Heart left ventricle (tissue), 16 donors: ENCODE measurements at regions of chr3 and their contacts with region 1.

Region 1: GRCh38 chr3:42961633-42962032 is 17.5 kb upstream of the GASK1A start:
- DNase-seq: peak in 2 of 5 donors; percentile 16 to 29
- ATAC-seq: peak in 3 of 4 donors; percentile 49 to 68 (median 59)
- H3K4me3 ChIP-seq: no peak overlapping the region
- H3K27ac ChIP-seq: no peak overlapping the region
- H3K4me1 ChIP-seq: peaks cover 0 to 6% (median 0%) of the 10 kb centered on the region in 12 donors
- H3K27me3 ChIP-seq: no peaks in the 10 kb centered on the region
- CTCF ChIP-seq: peak; percentile 50 to 79 (median 65)
- POLR2A ChIP-seq: no peak

Region 2: GRCh38 chr3:43013743-43014155 is 52.1 kb after region 1 on chr3:
- intact Hi-C with region 1: no loop called
- DNase-seq: no peak
- ATAC-seq: no peak
- H3K4me3 ChIP-seq: no peak overlapping the region
- H3K27ac ChIP-seq: peak overlapping the region in 1 of 12 donors; percentile 46
- H3K4me1 ChIP-seq: no peaks in the 10 kb centered on the region
- H3K27me3 ChIP-seq: no peaks in the 10 kb centered on the region
- CTCF ChIP-seq: no peak
- POLR2A ChIP-seq: no peak

Region 3: GRCh38 chr3:43087249-43087776 is 125.7 kb after region 1 on chr3:
- intact Hi-C with region 1: loop called in 1 of 10 experiments (anchors 10 kb)
- DNase-seq: no peak
- ATAC-seq: no peak
- H3K4me3 ChIP-seq: no peak overlapping the region
- H3K27ac ChIP-seq: no peak overlapping the region
- H3K4me1 ChIP-seq: peaks cover 0 to 8% (median 0%) of the 10 kb centered on the region in 12 donors
- H3K27me3 ChIP-seq: no peaks in the 10 kb centered on the region
- CTCF ChIP-seq: no peak
- POLR2A ChIP-seq: no peak

Region 4: DNA sequence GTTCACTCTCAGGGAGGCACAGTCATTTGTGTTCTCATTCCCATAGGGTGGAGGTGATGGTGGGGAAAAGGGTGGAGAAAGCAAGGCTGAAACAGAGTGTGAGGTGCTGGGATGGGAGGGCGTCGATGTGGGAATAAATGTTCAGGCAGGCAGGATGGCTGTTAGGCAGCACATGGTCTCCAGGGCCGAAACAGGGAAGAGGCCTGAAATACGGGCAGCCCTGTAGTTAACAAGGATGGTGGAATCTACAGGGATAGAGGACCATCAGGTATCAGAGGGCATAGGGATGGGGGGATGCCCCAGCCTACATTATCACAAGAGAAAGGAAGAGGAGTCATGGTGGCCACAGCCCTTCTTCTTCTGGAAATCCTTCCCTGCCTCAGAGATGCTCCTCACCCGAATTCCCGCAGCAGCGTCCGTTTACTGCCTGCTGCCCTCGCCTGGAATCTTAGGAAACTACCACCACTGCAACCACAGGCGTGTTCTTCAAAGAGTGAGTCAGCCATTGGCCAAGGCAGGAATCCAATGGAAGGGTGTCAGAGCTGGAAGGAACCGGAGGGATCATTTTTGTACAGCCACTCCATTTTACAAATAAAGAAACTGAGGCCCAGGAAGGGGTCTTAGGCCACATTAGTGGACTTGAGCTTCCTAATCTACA is 194.0 kb after region 1 on chr3:
- intact Hi-C with region 1: loop called (anchors 1 to 5 kb)
- DNase-seq: peak; percentile 43 to 73 (median 66)
- ATAC-seq: peak; percentile 41 to 89 (median 82)
- H3K4me3 ChIP-seq: no peak overlapping the region
- H3K27ac ChIP-seq: no peak overlapping the region
- H3K4me1 ChIP-seq: peaks cover 0 to 12% (median 0%) of the 10 kb centered on the region in 12 donors
- H3K27me3 ChIP-seq: no peaks in the 10 kb centered on the region
- CTCF ChIP-seq: peak; percentile 18 to 71 (median 56)
- POLR2A ChIP-seq: no peak

Region 5: GRCh38 chr3:43512754-43513404 is 551.2 kb after region 1 on chr3:
- intact Hi-C with region 1: loop called in 7 of 10 experiments (anchors 10 kb)
- DNase-seq: no peak
- ATAC-seq: no peak
- H3K4me3 ChIP-seq: no peak overlapping the region
- H3K27ac ChIP-seq: no peak overlapping the region
- H3K4me1 ChIP-seq: no peaks in the 10 kb centered on the region
- H3K27me3 ChIP-seq: no peaks in the 10 kb centered on the region
- CTCF ChIP-seq: no peak
- POLR2A ChIP-seq: no peak

Region 6: DNA sequence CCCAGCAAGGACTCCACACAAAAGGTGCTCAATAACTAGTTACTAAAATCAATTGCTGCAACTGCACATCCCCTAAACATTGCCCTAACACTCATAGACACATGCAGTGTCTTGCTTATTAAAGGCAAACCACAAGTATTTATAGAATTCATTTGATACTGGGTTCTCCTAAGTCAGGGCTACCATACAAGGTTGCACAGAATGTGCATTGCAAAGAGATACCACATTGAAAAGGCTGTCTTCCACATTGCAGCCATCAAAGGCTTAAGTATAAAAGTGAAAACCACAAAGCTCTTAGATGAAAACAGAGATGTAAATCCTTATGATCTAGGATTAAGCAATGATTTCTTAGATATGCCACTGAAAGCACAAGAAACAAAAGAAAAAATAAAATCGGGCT is 1246.5 kb after region 1 on chr3:
- intact Hi-C with region 1: loop called in 1 of 10 experiments (anchors 10 kb)
- DNase-seq: no peak
- ATAC-seq: no peak
- H3K4me3 ChIP-seq: no peak overlapping the region
- H3K27ac ChIP-seq: no peak overlapping the region
- H3K4me1 ChIP-seq: no peaks in the 10 kb centered on the region
- H3K27me3 ChIP-seq: peaks cover 0 to 10% (median 0%) of the 10 kb centered on the region in 9 donors
- CTCF ChIP-seq: no peak
- POLR2A ChIP-seq: no peak